ENCODE measurements at regions of chr11 and their contacts with region 1.

Region 1: DNA sequence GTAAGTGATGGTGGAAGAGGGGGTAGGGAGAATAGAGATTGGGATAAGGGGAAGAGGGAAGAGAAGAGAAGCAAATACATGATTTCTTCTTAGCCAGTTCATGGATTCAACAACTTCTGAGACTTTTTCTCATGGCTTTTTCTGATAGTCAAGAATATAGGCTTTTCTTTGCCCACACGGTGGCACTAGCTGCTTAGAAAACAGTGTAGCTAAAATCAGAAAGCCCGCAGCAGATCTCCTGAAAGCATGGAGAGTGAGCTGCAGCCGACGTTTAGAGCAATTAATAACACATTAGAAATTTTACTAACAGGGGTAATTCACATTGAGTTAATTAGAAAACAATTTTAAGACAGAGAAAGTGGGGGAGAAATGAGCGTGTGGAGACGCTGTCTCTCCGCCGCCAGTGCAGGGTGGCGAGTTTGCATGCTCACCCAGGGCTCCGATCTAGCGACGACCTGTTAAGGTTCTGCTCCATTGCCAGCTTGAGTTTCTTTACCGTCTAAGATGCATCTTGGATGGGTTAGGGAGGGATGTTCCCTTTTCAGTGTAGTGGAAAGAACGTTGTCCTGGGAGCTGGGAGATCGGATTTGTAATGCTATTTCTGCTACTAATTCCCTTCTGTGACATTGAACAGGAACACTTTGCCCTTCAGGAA is 3.3 kb upstream of the RAG1 start:
- DNase-seq: peak; percentile 69
- ATAC-seq: peak; percentile 66
- H3K4me3 Mint-ChIP-seq: peak overlapping the region; percentile 2
- H3K27ac Mint-ChIP-seq: no peak overlapping the region
- H3K4me1 Mint-ChIP-seq: no peaks in the 10 kb centered on the region
- H3K27me3 Mint-ChIP-seq: peaks cover 32% of the 10 kb centered on the region

Region 2: DNA sequence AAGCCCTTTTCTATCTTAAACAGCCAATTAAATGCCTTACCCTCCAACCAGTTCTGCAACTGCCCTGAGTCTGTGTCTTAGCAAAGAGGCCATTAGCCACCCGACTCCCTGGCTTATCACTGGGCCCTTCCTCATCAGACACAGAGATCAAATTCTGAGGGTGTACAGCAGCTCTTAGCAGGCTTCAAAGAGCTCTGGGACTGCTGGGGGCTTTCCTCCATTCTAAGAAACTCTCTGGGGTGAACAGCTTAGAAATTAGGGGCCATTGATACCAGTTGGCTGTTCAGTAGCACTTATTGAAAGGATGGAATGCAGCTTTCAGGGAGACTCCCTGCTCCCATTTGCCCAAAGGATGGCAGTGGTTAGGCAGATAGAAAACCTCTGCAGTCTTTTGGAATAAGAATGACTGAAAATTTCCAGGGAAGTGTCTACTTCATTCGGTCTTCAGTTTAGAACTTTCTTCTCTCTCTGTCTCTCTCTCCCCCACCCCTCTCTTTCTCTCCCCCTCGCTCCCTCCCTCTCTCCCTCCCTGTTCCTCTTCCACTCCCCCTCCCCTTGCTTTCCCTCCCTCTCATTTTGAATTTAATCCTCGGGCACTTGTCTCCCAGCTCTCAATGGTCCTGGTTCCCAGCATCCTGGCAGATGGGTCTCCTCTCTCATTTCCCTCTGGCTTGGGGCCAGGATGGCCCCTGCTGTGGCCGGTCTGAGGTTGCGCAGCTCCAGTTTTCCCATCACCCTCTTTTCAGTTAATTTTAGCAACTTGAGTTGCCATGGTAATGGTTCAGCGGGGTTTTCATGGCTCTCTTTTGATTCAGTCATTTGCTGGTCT is 351.7 kb before region 1 on chr11:
- CTCF ChIA-PET with region 1: no interaction called
- POLR2A ChIA-PET with region 1: no interaction called
- intact Hi-C with region 1: no loop called
- DNase-seq: no peak
- ATAC-seq: no peak
- H3K4me3 Mint-ChIP-seq: no peak overlapping the region
- H3K27ac Mint-ChIP-seq: no peak overlapping the region
- H3K4me1 Mint-ChIP-seq: no peaks in the 10 kb centered on the region
- H3K27me3 Mint-ChIP-seq: peaks cover 10% of the 10 kb centered on the region

Region 3: GRCh38 chr11:36577859-36578258 is 13.4 kb after region 1 on chr11:
- CTCF ChIA-PET with region 1: interaction called, 37 read pairs
- POLR2A ChIA-PET with region 1: no interaction called
- intact Hi-C with region 1: no loop called
- DNase-seq: no peak
- ATAC-seq: no peak
- H3K4me3 Mint-ChIP-seq: no peak overlapping the region
- H3K27ac Mint-ChIP-seq: no peak overlapping the region
- H3K4me1 Mint-ChIP-seq: no peaks in the 10 kb centered on the region
- H3K27me3 Mint-ChIP-seq: peaks cover 4% of the 10 kb centered on the region

Region 4: GRCh38 chr11:36622431-36623136 is 58.1 kb after region 1 on chr11:
- CTCF ChIA-PET with region 1: interaction called, 8 read pairs
- POLR2A ChIA-PET with region 1: no interaction called
- intact Hi-C with region 1: loop called (anchors 1 to 5 kb)
- DNase-seq: peak; percentile 9
- ATAC-seq: peak; percentile 63
- H3K4me3 Mint-ChIP-seq: no peak overlapping the region
- H3K27ac Mint-ChIP-seq: no peak overlapping the region
- H3K4me1 Mint-ChIP-seq: peaks cover 3% of the 10 kb centered on the region
- H3K27me3 Mint-ChIP-seq: peaks cover 9% of the 10 kb centered on the region

Region 5: GRCh38 chr11:36702330-36703055 is 138.0 kb after region 1 on chr11:
- CTCF ChIA-PET with region 1: interaction called, 16 read pairs
- POLR2A ChIA-PET with region 1: no interaction called
- intact Hi-C with region 1: no loop called
- DNase-seq: peak; percentile 10
- ATAC-seq: peak; percentile 51
- H3K4me3 Mint-ChIP-seq: no peak overlapping the region
- H3K27ac Mint-ChIP-seq: no peak overlapping the region
- H3K4me1 Mint-ChIP-seq: peaks cover 5% of the 10 kb centered on the region
- H3K27me3 Mint-ChIP-seq: peaks cover 21% of the 10 kb centered on the region

Region 6: GRCh38 chr11:36738292-36738861 is 173.9 kb after region 1 on chr11:
- CTCF ChIA-PET with region 1: interaction called, 40 read pairs
- POLR2A ChIA-PET with region 1: no interaction called
- intact Hi-C with region 1: no loop called
- DNase-seq: no peak
- ATAC-seq: no peak
- H3K4me3 Mint-ChIP-seq: no peak overlapping the region
- H3K27ac Mint-ChIP-seq: no peak overlapping the region
- H3K4me1 Mint-ChIP-seq: no peaks in the 10 kb centered on the region
- H3K27me3 Mint-ChIP-seq: peaks cover 9% of the 10 kb centered on the region

Region 7: GRCh38 chr11:37333345-37333744 is 768.8 kb after region 1 on chr11:
- CTCF ChIA-PET with region 1: no interaction called
- POLR2A ChIA-PET with region 1: no interaction called
- intact Hi-C with region 1: no loop called
- DNase-seq: no peak
- ATAC-seq: no peak
- H3K4me3 Mint-ChIP-seq: no peak overlapping the region
- H3K27ac Mint-ChIP-seq: no peak overlapping the region
- H3K4me1 Mint-ChIP-seq: no peaks in the 10 kb centered on the region
- H3K27me3 Mint-ChIP-seq: no peaks in the 10 kb centered on the region

Measured in activated CD4-positive, alpha-beta T cell treated with anti-CD3 and anti-CD28 coated beads for 36 hours (primary cell).